ENCODE measurements at regions of chr15 and their contacts with region 1.

Region 1: DNA sequence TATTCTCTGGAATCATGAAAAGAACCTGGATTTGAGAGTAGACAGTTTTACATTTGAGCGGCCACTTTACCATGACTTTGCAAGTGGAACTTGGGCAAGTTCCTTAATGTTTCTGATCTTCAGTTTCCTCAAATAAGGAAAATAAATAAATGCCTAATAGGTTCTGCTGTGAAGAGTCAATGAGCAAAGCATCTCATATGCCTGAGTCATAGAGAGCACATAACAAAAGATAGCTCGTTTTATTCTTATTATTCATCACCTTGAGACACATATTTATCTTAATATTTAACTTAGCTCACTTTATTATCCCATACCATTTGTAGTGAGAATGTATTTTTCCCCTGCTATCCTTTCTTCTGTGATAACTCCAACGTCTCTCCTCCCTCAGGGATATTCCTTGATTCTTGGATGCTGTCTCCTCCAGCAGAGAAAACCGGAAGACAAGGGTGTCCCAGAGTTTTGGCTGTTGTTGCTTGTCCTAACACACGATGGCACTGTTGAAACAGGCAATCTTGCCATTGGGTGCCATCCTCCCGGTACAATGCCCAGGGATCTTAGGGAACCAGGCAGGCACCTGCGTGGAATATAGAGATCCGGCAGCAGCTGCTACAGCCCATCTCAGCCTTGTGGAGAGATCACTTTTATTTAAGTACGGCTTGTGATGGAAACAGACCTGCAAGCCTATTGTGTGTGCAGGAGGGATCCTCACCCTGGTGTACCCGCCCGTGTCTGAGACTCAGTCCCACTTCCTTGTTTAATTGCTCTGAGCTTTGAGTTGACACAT is 33.3 kb upstream of the VPS33B start:
- DNase-seq: peak; percentile 45 to 93 (median 82)

Region 2: GRCh38 chr15:91224755-91225380 is 169.1 kb after region 1 on chr15:
- intact Hi-C with region 1: loop called (anchors 2 kb)
- DNase-seq: peak in 17 of 42 donors; percentile 8 to 74 (median 34)

Region 3: DNA sequence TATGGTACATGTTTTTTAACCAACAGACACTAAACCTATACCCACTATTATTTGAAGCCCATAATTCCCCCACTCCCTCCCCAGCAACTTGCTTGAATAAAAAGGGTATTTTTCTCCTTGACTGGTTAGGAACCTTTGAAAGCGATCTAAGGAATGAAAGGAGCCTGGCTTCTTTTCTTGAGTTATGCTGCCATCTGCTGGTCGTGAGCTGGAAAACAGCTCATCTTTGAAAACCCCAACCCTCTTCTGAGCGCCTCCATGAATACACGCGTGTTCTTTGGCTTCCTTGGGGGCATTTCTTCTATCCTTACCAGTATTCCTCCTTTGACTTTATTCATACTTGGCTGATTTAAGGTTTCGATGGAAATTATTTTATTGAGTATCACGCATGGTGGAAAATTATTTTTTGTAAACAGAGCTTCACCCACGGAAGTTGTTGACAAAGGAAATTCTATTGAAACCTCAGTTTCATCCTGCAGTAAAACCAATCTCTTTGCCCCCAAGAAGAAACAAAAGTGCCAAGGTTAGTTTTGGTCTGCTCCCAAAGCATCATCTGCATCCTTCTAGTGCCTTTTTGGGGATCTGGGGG is 215.9 kb after region 1 on chr15:
- intact Hi-C with region 1: loop called (anchors 2 kb)
- DNase-seq: peak; percentile 18 to 89 (median 68)

Measured in head of caudate nucleus (tissue), 42 donors.